Activated CD4-positive, alpha-beta T cell treated with anti-CD3 and anti-CD28 coated beads for 36 hours (primary cell): ENCODE measurements at regions of chr5 and their contacts with region 1.

Region 1: GRCh38 chr5:141359790-141360426 is at the start of gene PCDHGB2:
- DNase-seq: no peak
- ATAC-seq: peak; percentile 19
- H3K4me3 Mint-ChIP-seq: peak within 1 kb of the TSS; percentile 61
- H3K27ac Mint-ChIP-seq: no peak within 1 kb of the TSS
- H3K4me1 Mint-ChIP-seq: peaks cover 2% of the 10 kb centered on the region
- H3K27me3 Mint-ChIP-seq: peaks cover 76% of the 10 kb centered on the region
- total RNA-seq, gene PCDHGB2: 0.07 to 0.18 TPM

Region 2: GRCh38 chr5:140795259-140795641 is 564.7 kb before region 1 on chr5:
- CTCF ChIA-PET with region 1: no interaction called
- POLR2A ChIA-PET with region 1: no interaction called
- intact Hi-C with region 1: loop called in 1 of 2 experiments (anchors 10 kb)
- DNase-seq: no peak
- ATAC-seq: no peak
- H3K4me3 Mint-ChIP-seq: no peak overlapping the region
- H3K27ac Mint-ChIP-seq: no peak overlapping the region
- H3K4me1 Mint-ChIP-seq: no peaks in the 10 kb centered on the region
- H3K27me3 Mint-ChIP-seq: peaks cover 29% of the 10 kb centered on the region

Region 3: GRCh38 chr5:140840978-140841959 is 518.6 kb before region 1 on chr5 and contains the start of gene PCDHA8:
- CTCF ChIA-PET with region 1: no interaction called
- POLR2A ChIA-PET with region 1: no interaction called
- intact Hi-C with region 1: loop called in 1 of 2 experiments (anchors 10 kb)
- DNase-seq: peak; percentile 49
- ATAC-seq: no peak
- H3K4me3 Mint-ChIP-seq: no peak within 1 kb of the TSS
- H3K27ac Mint-ChIP-seq: no peak within 1 kb of the TSS
- H3K4me1 Mint-ChIP-seq: no peaks in the 10 kb centered on the region
- H3K27me3 Mint-ChIP-seq: peaks cover 22% of the 10 kb centered on the region
- total RNA-seq, gene PCDHA8: not detected

Region 4: GRCh38 chr5:140875066-140876065 is 484.5 kb before region 1 on chr5 and contains the start of gene PCDHA12:
- CTCF ChIA-PET with region 1: no interaction called
- POLR2A ChIA-PET with region 1: no interaction called
- intact Hi-C with region 1: loop called in 1 of 2 experiments (anchors 10 kb)
- DNase-seq: no peak
- ATAC-seq: no peak
- H3K4me3 Mint-ChIP-seq: no peak within 1 kb of the TSS
- H3K27ac Mint-ChIP-seq: no peak within 1 kb of the TSS
- H3K4me1 Mint-ChIP-seq: no peaks in the 10 kb centered on the region
- H3K27me3 Mint-ChIP-seq: peaks cover 38% of the 10 kb centered on the region
- total RNA-seq, gene PCDHA12: not detected

Region 5: DNA sequence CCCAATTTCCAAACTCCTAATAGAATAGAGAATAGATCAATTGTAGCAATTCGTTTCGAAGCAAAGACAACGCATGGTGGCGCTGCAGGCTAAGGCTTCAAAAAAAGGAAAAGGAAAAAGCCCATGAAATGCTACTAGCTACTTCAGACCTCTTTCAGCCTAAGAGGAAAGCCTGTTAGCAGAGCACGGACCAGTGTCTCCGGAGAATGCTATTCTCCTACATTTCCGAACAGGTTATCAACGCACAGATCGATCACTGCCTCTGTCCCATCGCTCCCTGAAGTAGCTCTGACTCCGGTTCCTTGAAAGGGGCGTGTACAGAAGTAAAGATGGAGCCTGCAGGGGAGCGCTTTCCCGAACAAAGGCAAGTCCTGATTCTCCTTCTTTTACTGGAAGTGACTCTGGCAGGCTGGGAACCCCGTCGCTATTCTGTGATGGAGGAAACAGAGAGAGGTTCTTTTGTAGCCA is 114.6 kb before region 1 on chr5 and contains the start of gene PCDHB15:
- CTCF ChIA-PET with region 1: interaction called, 3 read pairs
- POLR2A ChIA-PET with region 1: no interaction called
- intact Hi-C with region 1: loop called (anchors 5 to 10 kb)
- DNase-seq: peak; percentile 48
- ATAC-seq: no peak
- H3K4me3 Mint-ChIP-seq: peak within 1 kb of the TSS; percentile 17
- H3K27ac Mint-ChIP-seq: no peak within 1 kb of the TSS
- H3K4me1 Mint-ChIP-seq: no peaks in the 10 kb centered on the region
- H3K27me3 Mint-ChIP-seq: peaks cover 35% of the 10 kb centered on the region
- total RNA-seq, gene PCDHB15: not detected

Region 6: GRCh38 chr5:141439411-141440141 is 79.7 kb after region 1 on chr5:
- CTCF ChIA-PET with region 1: no interaction called
- POLR2A ChIA-PET with region 1: no interaction called
- intact Hi-C with region 1: no loop called
- DNase-seq: no peak
- ATAC-seq: no peak
- H3K4me3 Mint-ChIP-seq: no peak overlapping the region
- H3K27ac Mint-ChIP-seq: no peak overlapping the region
- H3K4me1 Mint-ChIP-seq: no peaks in the 10 kb centered on the region
- H3K27me3 Mint-ChIP-seq: peaks cover 27% of the 10 kb centered on the region